K562 (cell line): ENCODE measurements at regions of chr11 and their contacts with region 1.

Region 1: DNA sequence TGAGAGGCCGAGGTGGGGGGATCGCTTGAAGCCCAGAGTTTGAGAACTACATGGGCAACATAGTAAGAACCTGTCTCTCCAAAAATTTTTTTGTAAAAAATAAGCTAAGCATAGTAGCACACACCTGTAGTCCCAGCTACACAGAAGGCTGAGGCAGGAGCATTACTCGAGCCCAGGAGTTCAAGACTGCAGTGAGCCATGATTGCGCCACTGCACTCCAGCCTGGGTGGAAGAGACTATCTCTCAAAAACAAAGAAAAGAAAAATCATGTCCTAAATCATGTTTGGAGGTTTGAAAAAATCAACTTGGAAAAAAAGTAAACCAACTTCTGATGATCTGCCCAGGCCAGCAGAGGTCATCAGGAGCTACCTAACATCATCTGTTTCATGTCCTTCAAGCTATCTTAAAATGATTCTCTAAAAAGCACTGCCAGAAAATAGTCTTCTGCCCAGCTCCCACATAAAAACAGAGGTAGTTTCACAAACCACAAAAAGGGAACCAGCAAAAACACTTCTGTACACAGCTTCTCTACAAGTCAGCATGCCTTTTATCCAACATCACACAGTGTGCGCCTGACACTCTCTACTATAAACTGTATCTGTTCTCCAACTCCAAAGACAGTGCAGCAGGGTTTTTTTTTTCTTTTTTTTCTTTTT is 165.0 kb downstream of the SOX6 start:
- DNase-seq: peak in 2 of 4 experiments; percentile 35 to 54
- ATAC-seq: peak; percentile 75
- H3K4me3 ChIP-seq: no peak overlapping the region
- H3K27ac ChIP-seq: no peak overlapping the region
- H3K4me1 ChIP-seq: peaks cover 3 to 15% of the 10 kb centered on the region in 2 experiments; a peak in 4 of 5 replicates
- H3K27me3 ChIP-seq: no peaks in the 10 kb centered on the region
- CTCF ChIP-seq: peak in 2 of 3 experiments; percentile 53 to 67; a peak in 3 of 6 replicates
- EP300 ChIP-seq: no peak
- POLR2A ChIP-seq: no peak
- RAD21 ChIP-seq: peak; percentile 75 to 80

Region 2: DNA sequence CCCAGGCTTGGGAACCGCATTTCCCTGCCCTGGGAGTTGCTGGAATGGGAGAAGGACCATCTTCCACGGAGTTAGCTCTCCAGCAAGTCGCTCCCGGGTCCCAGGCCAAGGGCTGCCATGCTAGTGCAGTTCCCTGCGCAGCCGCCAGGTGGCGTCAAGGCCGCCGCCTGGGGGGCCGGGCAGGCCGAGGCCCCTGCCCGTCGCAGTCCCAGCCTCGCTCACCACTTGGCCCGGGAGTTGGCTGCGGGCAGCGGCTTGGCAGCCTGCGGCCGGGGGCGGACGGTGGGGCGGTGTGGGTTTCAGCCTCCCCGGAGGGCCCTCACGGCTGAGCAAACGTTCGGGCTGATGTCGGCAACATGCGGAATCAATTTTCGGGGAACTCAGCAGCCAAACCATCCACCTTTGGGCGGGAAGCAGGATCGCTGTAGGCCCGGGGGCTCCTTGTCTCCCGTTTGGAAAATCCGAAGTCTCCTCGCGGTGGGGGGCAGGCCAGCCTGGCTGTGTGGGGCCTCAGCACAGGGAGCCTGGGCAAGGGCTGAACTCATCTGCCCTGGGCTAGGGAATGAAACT is 250.1 kb before region 1 on chr11:
- CTCF ChIA-PET with region 1: no interaction called
- POLR2A ChIA-PET with region 1: no interaction called
- in situ Hi-C with region 1: no loop called
- intact Hi-C with region 1: loop called (anchors 10 kb)
- DNase-seq: peak; percentile 76 to 96 (median 92)
- ATAC-seq: peak; percentile 97
- H3K4me3 ChIP-seq: no peak overlapping the region
- H3K27ac ChIP-seq: no peak overlapping the region
- H3K4me1 ChIP-seq: peaks cover 0 to 14% of the 10 kb centered on the region in 2 experiments; a peak in 3 of 5 replicates
- H3K27me3 ChIP-seq: peaks cover 0 to 13% of the 10 kb centered on the region in 2 experiments; a peak in 3 of 5 replicates
- CTCF ChIP-seq: peak; percentile 88 to 97 (median 93)
- EP300 ChIP-seq: no peak
- POLR2A ChIP-seq: no peak
- RAD21 ChIP-seq: peak; percentile 89 to 91

Region 3: DNA sequence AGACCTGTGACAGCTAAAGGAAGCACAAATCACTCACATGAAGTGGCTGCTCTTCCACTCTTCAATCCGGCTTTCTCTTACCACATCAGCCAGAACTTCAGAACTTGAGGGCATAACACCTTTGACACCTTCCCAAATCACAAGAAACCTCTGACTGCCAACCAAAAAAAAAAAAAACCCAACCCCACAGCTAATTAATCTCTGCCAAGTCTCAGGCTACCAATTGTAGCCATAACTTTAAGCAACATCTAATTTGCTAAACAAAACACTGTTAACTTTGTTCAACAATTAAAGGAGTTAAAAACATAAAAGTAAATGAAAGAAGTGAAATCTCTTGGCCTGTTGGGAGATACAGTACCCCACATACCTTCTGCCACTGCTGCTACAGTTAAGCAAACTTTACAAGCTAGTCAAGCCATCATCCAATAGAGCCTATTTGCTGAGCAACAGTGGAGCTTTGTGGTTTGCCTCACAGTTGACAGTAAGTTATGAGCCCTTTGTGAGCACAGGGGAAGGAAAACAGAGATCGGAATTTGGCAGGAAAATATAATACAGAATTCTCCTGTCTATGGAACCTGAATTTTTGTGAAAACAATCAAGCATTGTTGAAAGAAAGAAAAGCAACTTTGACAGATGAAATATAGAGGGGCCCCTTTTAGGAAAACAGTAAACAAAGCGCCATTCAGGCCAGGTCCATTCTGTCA is 164.9 kb after region 1 on chr11 and contains the start of gene SOX6:
- CTCF ChIA-PET with region 1: no interaction called
- POLR2A ChIA-PET with region 1: no interaction called
- in situ Hi-C with region 1: no loop called
- intact Hi-C with region 1: loop called (anchors 5 kb)
- DNase-seq: peak in 2 of 4 experiments; percentile 29 to 70
- ATAC-seq: peak; percentile 76
- H3K4me3 ChIP-seq: no peak within 1 kb of the TSS
- H3K27ac ChIP-seq: peak within 1 kb of the TSS; percentile 53
- H3K4me1 ChIP-seq: peaks cover 4 to 55% of the 10 kb centered on the region in 2 experiments; a peak in 4 of 5 replicates
- H3K27me3 ChIP-seq: no peaks in the 10 kb centered on the region
- CTCF ChIP-seq: peak in 1 of 3 experiments; percentile 29; a peak in 3 of 6 replicates
- EP300 ChIP-seq: no peak
- POLR2A ChIP-seq: no peak
- RAD21 ChIP-seq: peak in 1 of 2 experiments; percentile 57; a peak in 3 of 4 replicates
- polyA plus RNA-seq, gene SOX6: 0.89 to 2.9 TPM